Gastrocnemius medialis (tissue), 4 donors: ENCODE measurements at regions of chr10 and their contacts with region 1.

Region 1: GRCh38 chr10:68901104-68901927 is at the start of gene DDX50:
- DNase-seq: peak; percentile 98 to 99
- ATAC-seq: peak; percentile 99
- H3K4me3 ChIP-seq: peak within 1 kb of the TSS; percentile 92 to 98 (median 96)
- H3K27ac ChIP-seq: peak within 1 kb of the TSS; percentile 93 to 99 (median 98)
- H3K4me1 ChIP-seq: peaks cover 18 to 26% of the 10 kb centered on the region in 2 donors
- H3K27me3 ChIP-seq: no peaks in the 10 kb centered on the region
- CTCF ChIP-seq: peak in 4 of 5 experiments; percentile 13 to 37 (median 16)
- POLR2A ChIP-seq: peak; percentile 77 to 82
- total RNA-seq, gene DDX50: 17.2 to 25.9 (median 23.7) TPM

Region 2: DNA sequence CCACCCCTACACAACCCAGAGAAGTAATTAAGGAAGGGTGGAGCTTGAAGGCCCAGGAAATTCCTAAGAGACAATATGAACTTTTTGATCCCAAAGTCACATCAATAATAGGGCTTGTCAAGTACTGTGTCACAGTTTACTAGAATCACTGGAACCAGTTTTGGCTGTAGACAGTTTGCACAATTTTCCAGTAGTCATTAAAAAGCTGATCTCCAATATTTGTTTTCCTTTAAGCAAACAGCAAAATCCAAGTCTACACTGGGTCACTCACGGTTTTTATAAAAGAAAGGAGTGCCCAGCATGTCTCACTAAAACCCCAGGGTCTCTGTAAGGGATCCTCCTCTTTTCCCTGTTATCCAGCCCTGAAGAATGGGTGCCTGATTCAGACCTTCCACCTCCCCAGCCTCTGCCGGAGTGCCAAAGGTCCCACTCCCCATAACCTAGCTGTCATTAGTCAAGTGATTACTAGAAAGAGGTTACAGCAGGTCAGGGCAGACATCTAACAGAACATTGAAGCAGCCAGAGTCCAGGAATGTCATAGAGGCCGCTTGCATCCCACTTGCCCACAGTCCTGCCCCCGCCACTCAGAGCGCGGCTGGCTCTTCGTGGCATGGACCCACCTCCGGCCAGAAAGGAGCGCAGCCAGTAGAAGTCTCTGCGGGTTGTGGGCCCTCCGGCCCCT is 374.5 kb before region 1 on chr10:
- in situ Hi-C with region 1: loop called (anchors 10 to 25 kb)
- intact Hi-C with region 1: no loop called
- DNase-seq: no peak
- ATAC-seq: peak; percentile 61 to 74
- H3K4me3 ChIP-seq: peak overlapping the region; percentile 83 to 100 (median 93)
- H3K27ac ChIP-seq: peak overlapping the region; percentile 88 to 100 (median 99)
- H3K4me1 ChIP-seq: peaks cover 4 to 8% of the 10 kb centered on the region in 2 donors
- H3K27me3 ChIP-seq: no peaks in the 10 kb centered on the region
- CTCF ChIP-seq: no peak
- POLR2A ChIP-seq: no peak

Region 3: DNA sequence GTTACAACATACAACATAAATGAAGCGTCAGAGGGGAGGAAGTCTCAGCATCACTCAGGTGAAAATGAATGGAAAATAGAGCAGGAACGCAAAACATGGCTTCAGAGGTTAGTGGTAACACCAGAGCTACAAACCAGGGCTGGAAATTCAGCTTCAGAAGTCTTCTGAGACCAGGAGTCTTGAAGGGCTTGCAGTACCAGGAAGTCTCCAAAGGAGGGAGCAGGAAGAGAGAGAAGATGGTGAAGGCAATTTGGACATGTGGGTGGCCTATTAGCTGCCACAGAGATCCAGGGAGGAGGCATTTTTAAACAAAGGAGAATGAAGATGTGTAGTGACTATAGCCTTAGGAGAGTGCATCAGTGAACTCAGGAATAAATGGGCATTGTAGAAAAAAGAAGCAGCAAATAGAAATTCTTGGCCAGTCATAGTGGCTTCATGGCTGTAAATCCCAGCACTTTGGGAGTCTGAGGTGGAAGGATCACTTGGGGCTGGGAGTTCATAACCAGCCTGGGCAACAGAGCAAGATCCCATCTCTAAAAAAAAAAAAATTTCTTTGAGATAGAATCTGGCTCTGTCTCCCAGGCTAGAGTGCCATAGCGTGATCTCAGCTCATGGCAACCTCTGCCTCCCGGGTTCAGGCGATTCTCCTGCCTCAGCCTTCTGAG is 350.4 kb before region 1 on chr10:
- in situ Hi-C with region 1: loop called in 3 of 4 experiments (anchors 25 kb)
- intact Hi-C with region 1: loop called (anchors 5 kb)
- DNase-seq: peak in 1 of 2 donors; percentile 35
- ATAC-seq: peak; percentile 88 to 89
- H3K4me3 ChIP-seq: no peak overlapping the region
- H3K27ac ChIP-seq: no peak overlapping the region
- H3K4me1 ChIP-seq: no peaks in the 10 kb centered on the region
- H3K27me3 ChIP-seq: no peaks in the 10 kb centered on the region
- CTCF ChIP-seq: peak in 4 of 5 experiments; percentile 50 to 74 (median 62)
- POLR2A ChIP-seq: no peak

Region 4: DNA sequence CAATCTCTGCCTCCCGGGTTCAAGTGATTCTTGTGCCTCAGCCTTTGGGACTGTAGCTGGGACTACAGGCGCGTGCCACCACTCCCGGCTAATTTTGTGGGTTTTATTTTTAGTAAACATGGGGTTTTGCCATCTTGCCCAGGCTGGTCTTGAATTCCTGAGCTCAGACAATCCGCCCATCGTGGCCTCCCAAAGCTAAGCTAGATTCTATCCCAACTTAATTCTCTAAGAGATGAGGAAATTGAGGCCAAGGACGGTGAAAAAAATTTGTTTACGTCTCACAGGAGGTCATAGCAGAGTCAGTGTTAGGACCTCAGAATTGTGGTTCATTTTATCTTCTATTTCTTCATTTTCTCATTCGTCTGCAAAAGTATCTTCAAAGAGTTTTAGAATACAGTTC is 174.2 kb before region 1 on chr10:
- in situ Hi-C with region 1: loop called in 1 of 4 experiments (anchors 25 kb)
- intact Hi-C with region 1: no loop called
- DNase-seq: no peak
- ATAC-seq: no peak
- H3K4me3 ChIP-seq: no peak overlapping the region
- H3K27ac ChIP-seq: peak overlapping the region in 3 of 4 donors; percentile 35 to 51 (median 45)
- H3K4me1 ChIP-seq: peaks cover 10% of the 10 kb centered on the region in 2 donors
- H3K27me3 ChIP-seq: no peaks in the 10 kb centered on the region
- CTCF ChIP-seq: no peak
- POLR2A ChIP-seq: no peak

Region 5: GRCh38 chr10:68826764-68827591 is 74.3 kb before region 1 on chr10 and contains the start of gene STOX1:
- in situ Hi-C with region 1: no loop called
- intact Hi-C with region 1: loop called (anchors 1 kb)
- DNase-seq: peak; percentile 10 to 15
- ATAC-seq: peak; percentile 72 to 73
- H3K4me3 ChIP-seq: peak within 1 kb of the TSS; percentile 52 to 70 (median 59)
- H3K27ac ChIP-seq: peak within 1 kb of the TSS in 1 of 4 donors; percentile 18
- H3K4me1 ChIP-seq: peaks cover 0 to 4% of the 10 kb centered on the region in 2 donors
- H3K27me3 ChIP-seq: no peaks in the 10 kb centered on the region
- CTCF ChIP-seq: no peak
- POLR2A ChIP-seq: no peak
- total RNA-seq, gene STOX1: 0.10 to 1.5 (median 1.1) TPM

Region 6: GRCh38 chr10:68871105-68871711 is 30.1 kb before region 1 on chr10:
- in situ Hi-C with region 1: no loop called
- intact Hi-C with region 1: no loop called
- DNase-seq: no peak
- ATAC-seq: peak; percentile 67 to 72
- H3K4me3 ChIP-seq: peak overlapping the region in 1 of 4 donors; percentile 3
- H3K27ac ChIP-seq: peak overlapping the region; percentile 35 to 77 (median 59)
- H3K4me1 ChIP-seq: peaks cover 15 to 21% of the 10 kb centered on the region in 2 donors
- H3K27me3 ChIP-seq: no peaks in the 10 kb centered on the region
- CTCF ChIP-seq: no peak
- POLR2A ChIP-seq: no peak